ENCODE measurements at regions of chr2 and their contacts with region 1.

Region 1: GRCh38 chr2:30208452-30208851 is 22.9 kb upstream of the LBH start:
- DNase-seq: no peak
- H3K4me3 ChIP-seq: no peak overlapping the region
- H3K27me3 ChIP-seq: no peaks in the 10 kb centered on the region; the same call in 1 of the 2 replicates
- CTCF ChIP-seq: peak; percentile 89

Region 2: GRCh38 chr2:30026087-30027055 is 182.1 kb before region 1 on chr2:
- CTCF ChIA-PET with region 1: no interaction called
- POLR2A ChIA-PET with region 1: no interaction called
- DNase-seq: peak; percentile 44
- H3K4me3 ChIP-seq: no peak overlapping the region
- H3K27me3 ChIP-seq: no peaks in the 10 kb centered on the region
- CTCF ChIP-seq: peak; percentile 68

Region 3: DNA sequence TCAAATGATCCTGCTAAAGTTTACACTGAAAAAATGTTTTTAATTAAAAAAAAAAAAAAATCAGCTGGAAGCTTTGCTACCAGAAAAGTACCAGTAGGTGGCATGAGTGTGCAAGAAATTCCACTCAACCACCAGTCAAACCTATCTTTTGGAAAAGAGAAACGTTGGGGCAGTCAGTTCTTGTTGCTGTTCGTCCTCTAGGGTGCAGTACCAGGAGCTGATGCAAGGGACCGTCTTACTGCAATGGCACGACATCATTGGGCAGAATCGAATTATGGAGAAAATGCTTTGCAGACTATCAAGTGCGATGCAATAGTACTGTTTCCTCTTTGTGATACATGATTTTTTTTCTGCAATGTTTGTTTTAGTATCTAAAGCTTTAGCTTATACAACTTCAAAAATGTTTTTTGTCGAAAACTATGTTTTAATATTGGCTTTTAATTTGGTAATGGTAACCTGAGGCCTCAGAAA is 43.4 kb before region 1 on chr2:
- CTCF ChIA-PET with region 1: interaction called, 69 read pairs
- POLR2A ChIA-PET with region 1: no interaction called
- DNase-seq: peak; percentile 63
- H3K4me3 ChIP-seq: no peak overlapping the region
- H3K27me3 ChIP-seq: no peaks in the 10 kb centered on the region; the same call in 1 of the 2 replicates
- CTCF ChIP-seq: peak; percentile 87

Region 4: GRCh38 chr2:30178618-30179434 is 29.6 kb before region 1 on chr2:
- CTCF ChIA-PET with region 1: interaction called, 4 read pairs
- POLR2A ChIA-PET with region 1: interaction called, 14 read pairs
- DNase-seq: peak; percentile 13
- H3K4me3 ChIP-seq: no peak overlapping the region
- H3K27me3 ChIP-seq: peaks cover 9% of the 10 kb centered on the region
- CTCF ChIP-seq: no peak

Region 5: GRCh38 chr2:30225131-30225762 is 16.8 kb after region 1 on chr2:
- CTCF ChIA-PET with region 1: interaction called, 14 read pairs
- POLR2A ChIA-PET with region 1: interaction called, 13 read pairs
- DNase-seq: peak; percentile 28
- H3K4me3 ChIP-seq: peak overlapping the region; percentile 24
- H3K27me3 ChIP-seq: peaks cover 6% of the 10 kb centered on the region; the same call in 1 of the 2 replicates
- CTCF ChIP-seq: peak; percentile 26; the same call in 1 of the 2 replicates

Region 6: DNA sequence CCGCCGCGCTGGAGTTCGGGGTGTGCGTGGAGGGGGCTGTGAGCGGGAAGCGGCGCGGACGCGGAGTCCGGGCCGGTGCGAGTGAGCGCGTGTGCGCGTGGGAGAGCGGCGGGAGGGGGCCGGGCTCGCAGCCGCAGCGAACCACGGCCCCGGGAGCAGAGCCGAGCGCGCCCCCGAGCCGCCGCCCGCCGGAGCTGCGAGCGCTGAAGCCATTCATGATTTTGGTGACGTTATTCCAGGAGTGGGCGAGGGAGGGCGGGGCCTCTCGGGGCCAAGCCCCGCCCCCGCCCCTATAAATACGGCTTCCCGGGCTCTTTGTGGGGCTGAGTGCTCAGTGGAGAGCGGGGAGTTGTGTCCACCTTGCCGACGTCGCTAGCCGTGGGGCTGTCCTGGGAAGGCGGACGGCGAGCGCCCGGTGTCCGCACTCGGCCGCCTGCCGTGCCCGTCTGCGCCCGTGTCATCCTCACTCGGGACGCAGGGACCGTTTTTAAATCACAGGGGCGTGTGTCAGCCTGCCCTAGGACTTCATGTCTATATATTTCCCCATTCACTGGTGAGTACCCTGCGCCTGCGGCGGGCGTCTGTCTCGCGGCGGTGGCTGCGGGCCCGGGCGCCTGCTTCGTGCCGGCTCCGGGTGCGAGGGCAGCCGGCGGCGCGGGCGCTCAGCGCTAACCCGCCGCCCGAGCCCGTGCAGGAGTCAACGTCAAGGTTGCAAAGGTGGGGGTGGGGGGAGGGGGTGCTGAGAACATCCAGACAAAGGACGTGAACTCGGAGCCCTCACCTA is 23.0 kb after region 1 on chr2 and contains the start of gene LBH:
- CTCF ChIA-PET with region 1: interaction called, 16 read pairs
- POLR2A ChIA-PET with region 1: interaction called, 4 read pairs
- DNase-seq: peak; percentile 40
- H3K4me3 ChIP-seq: peak within 1 kb of the TSS; percentile 69
- H3K27me3 ChIP-seq: no peaks in the 10 kb centered on the region
- CTCF ChIP-seq: no peak
- polyA plus RNA-seq, gene LBH: 115 and 145 TPM in 2 replicates

Region 7: DNA sequence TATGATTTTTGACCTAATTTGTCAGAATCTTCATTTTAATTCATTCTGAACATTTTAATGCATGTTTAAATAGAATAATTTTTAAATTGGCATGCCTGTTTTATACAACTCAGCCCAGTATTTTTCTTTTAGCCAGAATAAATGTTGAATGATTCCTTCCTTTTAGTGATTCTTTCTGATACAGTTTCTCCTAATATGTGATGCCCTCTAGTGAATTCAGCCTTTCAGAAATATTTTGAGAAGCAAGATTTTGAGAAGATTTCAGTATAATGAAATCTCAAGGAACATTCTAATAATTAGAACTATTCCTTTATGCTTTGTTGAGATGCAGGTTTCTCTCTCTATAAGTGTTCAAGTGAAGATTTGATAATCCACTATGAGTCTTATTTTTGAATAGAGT is 267.1 kb after region 1 on chr2:
- CTCF ChIA-PET with region 1: interaction called, 21 read pairs
- POLR2A ChIA-PET with region 1: no interaction called
- DNase-seq: no peak
- H3K4me3 ChIP-seq: no peak overlapping the region
- H3K27me3 ChIP-seq: no peaks in the 10 kb centered on the region
- CTCF ChIP-seq: no peak

Region 8: GRCh38 chr2:30691948-30692828 is 483.7 kb after region 1 on chr2:
- CTCF ChIA-PET with region 1: interaction called, 22 read pairs
- POLR2A ChIA-PET with region 1: no interaction called
- DNase-seq: no peak
- H3K4me3 ChIP-seq: no peak overlapping the region
- H3K27me3 ChIP-seq: peaks cover 2% of the 10 kb centered on the region; the same call in 1 of the 2 replicates
- CTCF ChIP-seq: peak; percentile 47

Region 9: GRCh38 chr2:31354837-31355236 is 1146.4 kb after region 1 on chr2:
- CTCF ChIA-PET with region 1: no interaction called
- POLR2A ChIA-PET with region 1: no interaction called
- DNase-seq: no peak
- H3K4me3 ChIP-seq: no peak overlapping the region
- H3K27me3 ChIP-seq: no peaks in the 10 kb centered on the region
- CTCF ChIP-seq: peak; percentile 28